ENCODE measurements at regions of chr17 and their contacts with region 1.

Region 1: DNA sequence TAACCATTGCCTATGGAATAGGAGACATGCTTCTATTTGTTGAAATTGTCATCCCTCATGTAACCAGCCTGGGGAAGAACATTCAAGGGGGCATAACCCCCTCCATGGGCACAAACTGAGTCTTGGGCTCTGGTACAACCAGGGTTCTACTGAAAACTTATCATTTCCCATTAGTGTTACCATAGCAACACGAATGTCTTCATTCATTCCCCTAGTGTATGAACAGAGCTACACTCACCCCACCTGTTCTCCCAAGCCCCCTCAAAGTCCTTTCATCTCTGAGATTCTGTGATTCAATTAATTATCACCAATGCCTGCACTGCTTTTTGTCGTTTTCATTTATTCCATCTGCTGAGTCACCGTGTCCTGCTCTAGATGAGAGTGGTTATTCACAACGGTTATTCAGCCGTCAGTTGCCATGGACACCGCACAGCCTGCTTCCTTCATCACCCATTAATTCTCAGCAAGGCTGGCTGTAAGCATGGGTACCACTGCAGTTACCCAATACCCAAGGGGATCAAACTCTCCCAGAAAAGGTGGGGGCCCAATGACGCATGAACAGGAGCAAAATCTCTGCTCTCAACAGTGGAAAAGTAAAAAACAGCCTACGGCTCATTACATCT is 1.6 kb upstream of the GAST start:
- DNase-seq: peak; percentile 65
- H3K4me3 Mint-ChIP-seq: no peak overlapping the region
- H3K27ac Mint-ChIP-seq: no peak overlapping the region
- H3K4me1 Mint-ChIP-seq: peaks cover 4% of the 10 kb centered on the region
- H3K27me3 Mint-ChIP-seq: no peaks in the 10 kb centered on the region

Region 2: GRCh38 chr17:41695954-41696756 is 14.4 kb before region 1 on chr17:
- CTCF ChIA-PET with region 1: interaction called, 15 read pairs
- intact Hi-C with region 1: no loop called
- DNase-seq: peak; percentile 90
- H3K4me3 Mint-ChIP-seq: no peak overlapping the region
- H3K27ac Mint-ChIP-seq: peak overlapping the region; percentile 63
- H3K4me1 Mint-ChIP-seq: peaks cover 16% of the 10 kb centered on the region
- H3K27me3 Mint-ChIP-seq: no peaks in the 10 kb centered on the region

Region 3: GRCh38 chr17:41728056-41728455 is 17.5 kb after region 1 on chr17:
- CTCF ChIA-PET with region 1: no interaction called
- intact Hi-C with region 1: no loop called
- DNase-seq: no peak
- H3K4me3 Mint-ChIP-seq: no peak overlapping the region
- H3K27ac Mint-ChIP-seq: no peak overlapping the region
- H3K4me1 Mint-ChIP-seq: peaks cover 2% of the 10 kb centered on the region
- H3K27me3 Mint-ChIP-seq: peaks cover 18% of the 10 kb centered on the region

Measured in activated naive CD4-positive, alpha-beta T cell treated with anti-CD3 and anti-CD28 coated beads for 36 hours (primary cell).